MCF 10A (cell line): ENCODE measurements at regions of chr2 and their contacts with region 1.

Region 1: GRCh38 chr2:208386541-208386940 is 20.1 kb upstream of the PTH2R start:
- DNase-seq: no peak
- H3K4me3 Mint-ChIP-seq: no peak overlapping the region
- H3K27ac Mint-ChIP-seq: no peak overlapping the region
- H3K4me1 Mint-ChIP-seq: no peaks in the 10 kb centered on the region
- H3K27me3 Mint-ChIP-seq: peaks cover 28% of the 10 kb centered on the region
- CTCF ChIP-seq: no peak

Region 2: DNA sequence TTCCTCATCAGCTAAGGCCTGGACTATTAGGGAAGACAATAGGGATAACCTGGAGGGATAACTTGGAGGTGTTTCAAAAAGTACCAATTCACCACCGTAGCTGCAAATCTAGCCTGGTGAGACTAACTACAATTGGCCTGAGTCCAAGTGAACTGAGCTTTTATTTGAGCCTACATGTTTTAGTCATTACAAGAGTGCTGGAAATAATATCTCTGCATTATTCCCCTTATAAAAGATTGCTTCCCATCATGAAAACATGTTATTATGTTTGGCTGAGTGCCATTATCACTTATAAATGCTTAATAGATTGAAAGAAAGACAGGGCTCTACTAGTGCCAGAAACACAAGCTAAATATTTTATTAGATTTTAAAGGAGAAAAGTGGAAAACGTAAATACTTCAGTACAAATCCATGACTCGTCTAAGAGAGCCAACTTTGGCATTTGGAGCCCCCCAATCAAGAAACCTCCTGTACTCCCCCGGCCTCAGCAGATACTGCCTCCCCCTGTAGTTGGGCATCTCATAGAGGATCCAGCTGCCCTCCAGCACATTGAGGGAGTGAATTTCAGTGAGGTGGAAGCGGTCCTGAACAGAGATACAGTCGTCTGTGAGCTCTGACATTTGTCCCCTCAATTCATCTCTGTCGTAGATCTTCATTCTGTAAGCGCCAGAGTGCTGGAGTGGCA is 244.2 kb before region 1 on chr2:
- CTCF ChIA-PET with region 1: no interaction called
- POLR2A ChIA-PET with region 1: no interaction called
- intact Hi-C with region 1: no loop called
- DNase-seq: peak; percentile 17
- H3K4me3 Mint-ChIP-seq: no peak overlapping the region
- H3K27ac Mint-ChIP-seq: no peak overlapping the region
- H3K4me1 Mint-ChIP-seq: peaks cover 7% of the 10 kb centered on the region
- H3K27me3 Mint-ChIP-seq: no peaks in the 10 kb centered on the region
- CTCF ChIP-seq: no peak

Region 3: DNA sequence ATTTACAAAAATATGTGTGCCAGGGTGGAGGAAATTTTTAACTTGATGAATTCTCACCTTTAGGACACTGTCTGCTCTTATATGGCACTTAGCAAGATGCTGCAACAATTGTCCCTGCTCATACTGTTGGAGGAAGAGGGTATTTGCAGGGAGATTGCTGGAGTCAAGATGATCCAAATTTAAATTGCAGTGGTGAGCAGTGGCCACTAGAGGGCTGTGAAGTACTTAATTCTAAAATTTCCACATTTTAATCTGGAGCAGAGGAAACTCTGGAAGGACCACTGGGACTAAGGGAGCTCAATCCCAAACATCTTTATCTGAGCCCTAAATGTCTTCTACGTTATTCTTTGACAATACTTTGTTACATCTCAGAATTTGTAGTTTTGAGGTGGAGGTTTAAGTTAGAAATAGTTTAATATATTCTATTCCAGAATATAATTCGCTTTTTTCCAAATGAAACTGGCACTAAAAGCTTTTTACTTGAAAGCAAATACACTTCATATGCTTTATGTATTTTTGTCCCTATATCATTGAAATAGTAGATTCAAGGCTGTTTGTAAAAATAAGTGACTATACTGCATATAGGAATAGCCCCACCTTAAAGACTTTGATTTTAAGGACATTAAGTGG is 13.0 kb before region 1 on chr2:
- CTCF ChIA-PET with region 1: interaction called, 54 read pairs
- POLR2A ChIA-PET with region 1: no interaction called
- intact Hi-C with region 1: no loop called
- DNase-seq: peak; percentile 59
- H3K4me3 Mint-ChIP-seq: no peak overlapping the region
- H3K27ac Mint-ChIP-seq: no peak overlapping the region
- H3K4me1 Mint-ChIP-seq: peaks cover 5% of the 10 kb centered on the region
- H3K27me3 Mint-ChIP-seq: no peaks in the 10 kb centered on the region
- CTCF ChIP-seq: peak; percentile 65